ENCODE measurements at regions of chr9 and their contacts with region 1.

Region 1: DNA sequence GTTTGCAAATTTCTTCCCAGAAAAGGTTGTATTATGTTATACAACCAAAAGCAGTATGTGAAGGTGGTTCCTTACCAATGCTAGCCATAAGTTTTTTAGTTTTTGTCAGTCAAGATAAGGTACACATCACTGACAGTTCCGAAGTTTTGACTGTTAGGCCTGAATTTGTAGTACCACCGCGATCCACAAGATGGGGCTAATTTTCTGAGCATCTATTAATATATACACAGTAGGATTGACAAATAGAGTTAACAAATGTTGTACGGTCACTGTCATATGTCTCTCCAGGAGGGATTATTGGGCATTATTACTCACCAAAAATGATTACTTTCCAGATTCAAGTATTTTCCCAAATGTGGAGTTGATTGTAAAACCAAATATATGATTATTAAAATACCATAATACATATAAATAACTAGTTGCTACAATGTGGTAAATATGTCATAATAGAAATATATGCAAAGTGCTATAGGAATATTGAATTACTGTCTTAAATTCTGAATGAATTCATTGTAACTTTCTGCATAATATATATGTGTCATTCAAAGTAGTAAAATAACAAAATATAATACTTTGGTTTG is 28.4 kb upstream of the LRRC19 start:
- DNase-seq: peak; percentile 13
- ATAC-seq: peak; percentile 90
- H3K4me3 ChIP-seq: no peak overlapping the region
- H3K27ac ChIP-seq: no peak overlapping the region
- H3K4me1 ChIP-seq: no peaks in the 10 kb centered on the region
- H3K27me3 ChIP-seq: no peaks in the 10 kb centered on the region
- CTCF ChIP-seq: peak; percentile 67 to 77 (median 70)
- EP300 ChIP-seq: no peak
- POLR2A ChIP-seq: no peak
- RAD21 ChIP-seq: peak; percentile 59

Region 2: DNA sequence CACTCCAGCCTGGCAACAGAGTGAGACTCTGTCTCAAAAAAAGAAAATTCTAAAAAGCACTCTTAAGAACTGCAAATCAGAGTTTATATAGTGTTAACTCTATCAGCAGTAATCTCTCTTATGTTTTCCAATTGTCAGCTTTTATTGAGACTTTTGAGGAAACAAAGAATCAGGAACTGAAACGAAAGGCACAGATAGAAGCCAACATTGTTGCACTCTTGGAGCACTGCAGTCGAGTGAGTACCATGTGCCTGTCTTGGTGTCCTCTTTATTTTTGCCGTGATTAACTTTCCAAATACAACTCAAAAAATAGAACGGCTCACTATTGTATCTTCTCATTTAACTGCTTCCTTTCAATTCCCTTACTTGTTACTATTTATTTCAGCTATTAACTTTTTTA is 13.2 kb after region 1 on chr9:
- CTCF ChIA-PET with region 1: interaction called, 10 read pairs
- POLR2A ChIA-PET with region 1: no interaction called
- RAD21 ChIA-PET with region 1: no interaction called
- SMC1A ChIA-PET with region 1: interaction called, 7 read pairs
- in situ Hi-C with region 1: no loop called
- intact Hi-C with region 1: no loop called
- DNase-seq: no peak
- ATAC-seq: no peak
- H3K4me3 ChIP-seq: no peak overlapping the region
- H3K27ac ChIP-seq: no peak overlapping the region
- H3K4me1 ChIP-seq: no peaks in the 10 kb centered on the region
- H3K27me3 ChIP-seq: no peaks in the 10 kb centered on the region
- CTCF ChIP-seq: no peak
- EP300 ChIP-seq: no peak
- POLR2A ChIP-seq: no peak
- RAD21 ChIP-seq: no peak

Region 3: DNA sequence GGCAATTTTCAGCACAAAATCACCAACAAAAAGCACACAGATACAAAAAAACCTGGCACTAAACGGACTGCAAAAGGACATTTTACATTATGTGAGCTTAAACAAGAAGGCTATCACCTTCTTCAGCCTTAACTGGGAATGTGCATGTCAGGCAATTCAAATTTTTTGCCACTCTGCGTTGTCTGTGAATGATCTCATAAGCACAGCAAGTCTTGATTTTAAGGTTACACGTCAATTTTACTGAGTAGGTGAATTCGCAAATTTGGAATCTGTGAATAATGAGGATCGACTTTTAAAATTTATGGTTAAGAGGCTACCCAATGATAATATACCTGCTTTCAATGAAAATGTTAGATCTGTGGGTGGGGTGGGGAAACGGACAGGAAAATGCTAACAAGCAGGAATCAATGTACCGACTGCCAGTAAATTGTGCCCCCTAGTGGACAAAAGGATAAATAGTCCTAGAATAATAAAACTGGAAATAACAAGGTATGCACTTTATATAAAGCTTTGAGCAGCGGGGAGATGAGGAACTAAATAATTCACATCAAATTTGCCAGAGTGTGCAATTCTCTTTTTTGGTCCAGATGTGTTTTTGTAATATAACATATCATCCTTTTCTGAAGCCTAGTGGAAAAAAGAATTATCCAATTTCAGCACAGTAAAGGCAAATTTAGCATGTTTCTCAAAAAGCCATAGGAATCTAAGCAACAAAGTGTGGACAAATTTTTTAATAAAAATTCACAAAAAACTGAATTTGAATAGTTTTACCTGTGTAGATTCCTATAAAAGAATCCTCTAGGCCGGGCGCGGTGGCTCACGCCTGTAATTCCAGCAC is 242.5 kb after region 1 on chr9:
- CTCF ChIA-PET with region 1: interaction called, 6 read pairs
- POLR2A ChIA-PET with region 1: no interaction called
- RAD21 ChIA-PET with region 1: interaction called, 3 read pairs
- SMC1A ChIA-PET with region 1: interaction called, 6 read pairs
- in situ Hi-C with region 1: loop called (anchors 5 kb)
- intact Hi-C with region 1: loop called (anchors 1 kb)
- DNase-seq: no peak
- ATAC-seq: peak; percentile 72
- H3K4me3 ChIP-seq: no peak overlapping the region
- H3K27ac ChIP-seq: no peak overlapping the region
- H3K4me1 ChIP-seq: no peaks in the 10 kb centered on the region
- H3K27me3 ChIP-seq: no peaks in the 10 kb centered on the region
- CTCF ChIP-seq: peak; percentile 49 to 66 (median 64); a peak in 5 of 6 replicates
- EP300 ChIP-seq: no peak
- POLR2A ChIP-seq: no peak
- RAD21 ChIP-seq: peak; percentile 81

Region 4: GRCh38 chr9:27303219-27303618 is 269.3 kb after region 1 on chr9:
- CTCF ChIA-PET with region 1: no interaction called
- POLR2A ChIA-PET with region 1: no interaction called
- RAD21 ChIA-PET with region 1: no interaction called
- SMC1A ChIA-PET with region 1: no interaction called
- in situ Hi-C with region 1: no loop called
- intact Hi-C with region 1: no loop called
- DNase-seq: no peak
- ATAC-seq: no peak
- H3K4me3 ChIP-seq: no peak overlapping the region
- H3K27ac ChIP-seq: no peak overlapping the region
- H3K4me1 ChIP-seq: no peaks in the 10 kb centered on the region
- H3K27me3 ChIP-seq: 0 out of 4 replicates have a peak, but pooled peaks cover 0 to 2% of the 10 kb centered on the region in 2 experiments
- CTCF ChIP-seq: no peak
- EP300 ChIP-seq: no peak
- POLR2A ChIP-seq: no peak
- RAD21 ChIP-seq: no peak

Region 5: GRCh38 chr9:27548055-27548741 is 514.3 kb after region 1 on chr9:
- CTCF ChIA-PET with region 1: interaction called, 11 read pairs
- POLR2A ChIA-PET with region 1: no interaction called
- RAD21 ChIA-PET with region 1: no interaction called
- SMC1A ChIA-PET with region 1: interaction called, 3 read pairs
- in situ Hi-C with region 1: no loop called
- intact Hi-C with region 1: no loop called
- DNase-seq: no peak
- ATAC-seq: peak; percentile 74
- H3K4me3 ChIP-seq: no peak overlapping the region
- H3K27ac ChIP-seq: no peak overlapping the region
- H3K4me1 ChIP-seq: no peaks in the 10 kb centered on the region
- H3K27me3 ChIP-seq: no peaks in the 10 kb centered on the region
- CTCF ChIP-seq: peak; percentile 24 to 58 (median 30); a peak in 3 of 6 replicates
- EP300 ChIP-seq: no peak
- POLR2A ChIP-seq: no peak
- RAD21 ChIP-seq: peak; percentile 75